IMR-90 (cell line): ENCODE measurements at regions of chr2 and their contacts with region 1.

Region 1: DNA sequence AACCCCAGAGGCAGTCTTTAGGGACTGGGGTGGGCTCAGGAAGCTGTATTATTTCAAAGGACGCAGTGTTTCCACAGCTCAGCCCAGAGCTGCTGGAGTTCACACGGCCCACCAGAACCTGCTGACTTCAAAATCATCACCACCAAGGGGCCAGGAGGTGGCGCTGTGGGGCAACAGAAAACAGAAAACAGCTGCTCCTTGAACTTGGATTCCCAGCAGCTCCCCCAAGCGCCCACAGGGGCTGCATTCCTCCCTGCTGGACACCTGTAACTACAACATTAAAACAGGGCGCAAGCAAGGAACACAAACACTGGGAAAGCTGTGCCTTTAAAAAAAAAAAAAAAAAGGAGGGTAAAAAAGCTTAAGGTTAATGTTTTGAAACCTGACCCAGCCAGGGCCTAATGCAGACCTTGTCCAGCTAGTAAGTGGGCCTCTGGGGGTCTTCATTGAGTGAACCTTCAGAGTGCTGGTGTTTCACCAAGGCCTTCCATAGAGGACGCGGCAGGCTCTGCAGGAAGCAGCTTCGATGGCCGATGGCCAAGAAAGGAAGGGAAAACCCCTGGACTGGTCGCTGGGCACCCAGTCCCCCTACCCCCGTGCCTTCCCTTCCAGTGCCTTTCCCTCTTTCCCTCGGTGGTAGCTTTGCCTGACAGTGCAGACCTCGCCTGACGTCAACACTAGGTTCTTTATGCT is 25.9 kb downstream of the MLPH start:
- DNase-seq: peak; percentile 85
- ATAC-seq: peak; percentile 91
- H3K4me3 ChIP-seq: no peak overlapping the region
- H3K27ac ChIP-seq: no peak overlapping the region
- H3K4me1 ChIP-seq: peaks cover 18% of the 10 kb centered on the region; the same call in 1 of the 2 replicates
- H3K27me3 ChIP-seq: no peaks in the 10 kb centered on the region
- CTCF ChIP-seq: peak; percentile 98
- POLR2A ChIP-seq: no peak
- RAD21 ChIP-seq: peak; percentile 89

Region 2: DNA sequence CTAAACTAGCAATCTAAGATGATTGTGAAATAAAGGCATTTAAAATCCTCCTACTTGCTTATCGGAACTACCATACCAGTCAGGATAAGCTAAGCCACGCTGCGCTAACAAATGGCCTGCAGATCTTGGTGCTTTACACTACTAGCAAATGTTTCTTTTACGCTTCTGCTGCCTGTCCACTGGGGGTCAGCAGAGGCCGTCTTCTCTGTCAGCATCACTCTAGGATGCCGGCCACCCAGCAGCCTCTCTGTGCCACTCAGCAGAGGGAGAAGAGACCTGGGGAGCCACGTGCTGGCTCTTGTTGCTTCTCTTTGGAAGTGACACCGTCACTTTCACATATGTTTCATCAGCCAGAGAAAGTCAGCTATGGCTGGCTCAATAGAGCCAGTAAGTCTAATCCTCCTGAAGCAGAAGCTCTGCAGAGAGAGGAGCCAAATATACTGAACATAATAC is 390.7 kb before region 1 on chr2:
- CTCF ChIA-PET with region 1: interaction called, 5 read pairs
- POLR2A ChIA-PET with region 1: no interaction called
- dilution Hi-C with region 1: no loop called
- in situ Hi-C with region 1: no loop called
- intact Hi-C with region 1: loop called (anchors 1 kb)
- DNase-seq: peak; percentile 87
- ATAC-seq: peak; percentile 94
- H3K4me3 ChIP-seq: no peak overlapping the region
- H3K27ac ChIP-seq: peak overlapping the region; percentile 53; the same call in 1 of the 2 replicates
- H3K4me1 ChIP-seq: peaks cover 13% of the 10 kb centered on the region
- H3K27me3 ChIP-seq: no peaks in the 10 kb centered on the region
- CTCF ChIP-seq: peak; percentile 84
- POLR2A ChIP-seq: 0 out of 2 replicates have a peak, but pooled peaks have one; percentile 34
- RAD21 ChIP-seq: peak; percentile 93

Region 3: DNA sequence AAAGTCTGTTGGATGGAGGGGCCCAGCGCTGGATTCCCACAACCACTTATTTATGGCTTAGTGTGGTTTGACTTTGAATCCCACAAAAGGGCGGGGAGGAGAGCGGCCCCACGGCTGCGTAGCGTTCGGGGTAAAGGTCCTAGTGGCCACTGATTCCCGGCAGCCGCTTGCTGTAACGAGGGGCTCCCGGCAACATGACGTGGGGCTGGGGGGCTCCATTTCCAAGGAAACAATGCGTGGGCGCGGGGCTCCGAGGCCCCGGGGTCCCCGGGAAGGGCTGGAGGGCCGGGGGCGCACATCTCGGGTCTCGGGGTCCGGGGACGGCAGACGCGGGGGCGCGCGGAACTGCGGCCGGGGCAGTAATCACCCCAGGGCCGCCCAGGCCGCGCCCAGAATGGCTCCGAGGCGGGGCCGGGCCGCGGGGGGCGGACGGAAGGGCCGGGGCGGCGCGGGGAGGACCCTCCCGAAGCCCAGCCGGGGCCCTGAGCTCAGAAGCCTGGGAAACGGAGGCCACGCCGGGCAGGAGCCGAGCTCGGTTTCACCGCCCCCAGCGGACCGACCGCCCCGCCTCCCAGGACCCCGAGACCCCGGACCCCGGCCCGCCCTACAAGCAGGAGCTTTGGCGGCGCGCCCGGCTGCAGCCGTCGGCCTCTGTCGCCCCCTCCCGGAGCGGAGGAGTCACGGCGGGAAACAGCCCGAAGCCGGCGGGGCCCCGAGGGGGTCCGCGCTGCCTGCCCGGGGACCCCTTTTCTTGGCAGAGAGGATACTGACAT is 37.8 kb before region 1 on chr2:
- CTCF ChIA-PET with region 1: interaction called, 18 read pairs
- POLR2A ChIA-PET with region 1: interaction called, 3 read pairs
- dilution Hi-C with region 1: no loop called
- in situ Hi-C with region 1: no loop called
- intact Hi-C with region 1: loop called (anchors 1 kb)
- DNase-seq: peak; percentile 77
- ATAC-seq: peak; percentile 93
- H3K4me3 ChIP-seq: peak overlapping the region; percentile 43
- H3K27ac ChIP-seq: peak overlapping the region; percentile 95
- H3K4me1 ChIP-seq: peaks cover 20% of the 10 kb centered on the region
- H3K27me3 ChIP-seq: no peaks in the 10 kb centered on the region
- CTCF ChIP-seq: peak; percentile 85
- POLR2A ChIP-seq: peak; percentile 51
- RAD21 ChIP-seq: peak; percentile 71

Region 4: GRCh38 chr2:237500681-237501424 is 12.1 kb before region 1 on chr2:
- CTCF ChIA-PET with region 1: interaction called, 11 read pairs
- POLR2A ChIA-PET with region 1: no interaction called
- dilution Hi-C with region 1: no loop called
- in situ Hi-C with region 1: no loop called
- intact Hi-C with region 1: no loop called
- DNase-seq: peak; percentile 100
- ATAC-seq: peak; percentile 90
- H3K4me3 ChIP-seq: no peak overlapping the region
- H3K27ac ChIP-seq: peak overlapping the region; percentile 86
- H3K4me1 ChIP-seq: peaks cover 25% of the 10 kb centered on the region
- H3K27me3 ChIP-seq: no peaks in the 10 kb centered on the region
- CTCF ChIP-seq: no peak
- POLR2A ChIP-seq: peak; percentile 66
- RAD21 ChIP-seq: peak; percentile 11

Region 5: DNA sequence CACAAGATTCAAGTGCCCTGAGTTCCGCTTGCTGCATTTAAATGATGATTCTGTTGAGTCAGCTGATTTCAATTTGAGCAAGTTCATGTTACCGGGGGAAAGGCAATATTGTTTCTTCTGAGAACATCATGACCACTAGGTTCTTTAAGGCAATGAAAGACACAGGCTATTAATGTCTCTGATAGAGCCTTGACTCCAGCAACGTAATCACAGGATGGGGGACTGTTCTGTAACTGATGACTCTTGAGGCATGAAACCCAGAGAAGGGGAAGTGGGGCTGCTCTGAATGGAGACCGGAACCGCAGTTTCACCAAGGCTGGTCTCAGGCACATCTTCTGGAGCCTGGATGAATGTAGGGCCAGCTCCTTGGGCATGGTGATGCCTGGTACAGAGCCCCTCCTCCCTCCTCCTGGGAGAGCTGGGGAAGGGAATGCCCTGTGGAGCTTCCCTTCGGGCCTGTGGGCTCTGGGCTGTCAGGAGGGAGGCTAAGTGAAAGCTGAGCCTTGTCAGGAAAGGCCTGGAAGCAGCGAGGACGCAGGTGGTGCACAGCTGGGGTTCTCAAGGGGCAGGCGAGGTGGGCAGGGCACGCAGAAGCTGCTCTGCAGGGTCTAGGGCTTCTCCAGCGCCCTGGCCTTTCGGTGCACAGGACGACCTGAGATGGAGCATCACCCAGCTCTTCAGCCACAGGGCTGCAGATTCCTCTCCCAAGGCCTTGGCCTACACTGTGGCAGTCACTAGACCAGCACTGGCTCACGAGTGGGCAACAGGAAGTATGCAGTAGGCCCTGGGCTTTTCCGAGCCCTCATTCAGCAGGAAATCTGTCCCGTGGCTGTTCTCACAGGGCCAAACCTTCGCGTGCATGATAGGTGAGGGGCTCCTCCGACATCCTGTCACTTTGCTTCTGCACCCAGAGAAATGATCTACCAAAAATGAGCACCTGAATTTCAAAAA is 16.8 kb after region 1 on chr2:
- CTCF ChIA-PET with region 1: interaction called, 11 read pairs
- POLR2A ChIA-PET with region 1: no interaction called
- dilution Hi-C with region 1: no loop called
- in situ Hi-C with region 1: no loop called
- intact Hi-C with region 1: no loop called
- DNase-seq: no peak
- ATAC-seq: no peak
- H3K4me3 ChIP-seq: no peak overlapping the region
- H3K27ac ChIP-seq: no peak overlapping the region
- H3K4me1 ChIP-seq: no peaks in the 10 kb centered on the region
- H3K27me3 ChIP-seq: no peaks in the 10 kb centered on the region
- CTCF ChIP-seq: no peak
- POLR2A ChIP-seq: no peak
- RAD21 ChIP-seq: no peak

Region 6: DNA sequence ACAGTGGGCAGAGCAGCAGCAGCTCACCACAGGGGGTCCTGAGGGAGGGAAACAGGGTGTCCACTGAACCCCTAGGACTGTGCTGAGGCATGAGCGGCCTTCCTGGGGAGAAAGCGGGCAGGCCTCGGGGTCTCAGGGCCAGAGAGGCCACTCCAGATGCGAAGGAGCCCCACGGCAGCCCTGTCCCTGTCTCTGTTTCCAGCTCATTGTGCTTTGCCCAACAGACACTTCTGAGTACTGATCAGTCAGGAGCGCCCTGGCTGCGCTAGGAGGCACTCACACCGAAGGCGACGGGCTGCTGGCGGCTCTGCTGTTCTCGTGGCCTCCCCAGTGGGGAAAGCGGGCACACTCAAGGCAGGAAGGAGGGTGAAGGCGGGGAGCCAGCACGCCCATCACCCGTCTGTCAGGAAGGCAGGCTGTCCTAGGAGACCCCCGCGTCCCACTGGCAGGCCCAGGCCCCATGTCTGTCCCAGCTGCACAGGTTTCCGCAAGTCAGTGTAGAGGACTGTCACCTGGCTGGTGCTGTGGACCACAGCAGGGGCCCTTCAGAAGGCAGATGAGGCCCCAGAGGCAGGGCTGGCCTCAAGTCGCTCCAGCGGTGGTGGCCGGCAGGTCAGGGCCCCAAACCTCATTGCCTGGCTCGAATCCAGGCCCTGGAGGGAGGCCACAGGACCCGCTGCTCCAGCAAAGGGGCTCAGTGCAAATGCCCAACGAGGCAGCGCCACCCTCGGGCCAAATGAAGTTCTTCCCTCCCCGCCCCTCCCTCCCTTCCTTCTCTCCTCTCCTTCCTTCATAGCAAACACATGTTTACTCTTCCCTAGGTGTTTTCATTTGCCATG is 594.0 kb after region 1 on chr2:
- CTCF ChIA-PET with region 1: no interaction called
- POLR2A ChIA-PET with region 1: no interaction called
- dilution Hi-C with region 1: no loop called
- in situ Hi-C with region 1: no loop called
- intact Hi-C with region 1: no loop called
- DNase-seq: no peak
- ATAC-seq: no peak
- H3K4me3 ChIP-seq: no peak overlapping the region
- H3K27ac ChIP-seq: no peak overlapping the region
- H3K4me1 ChIP-seq: no peaks in the 10 kb centered on the region
- H3K27me3 ChIP-seq: no peaks in the 10 kb centered on the region; the same call in 1 of the 2 replicates
- CTCF ChIP-seq: 0 out of 2 replicates have a peak, but pooled peaks have one; percentile 16
- POLR2A ChIP-seq: no peak
- RAD21 ChIP-seq: peak; percentile 32